Right ventricle myocardium superior (tissue), 1 donor: ENCODE measurements at regions of chr7 and their contacts with region 1.

Region 1: DNA sequence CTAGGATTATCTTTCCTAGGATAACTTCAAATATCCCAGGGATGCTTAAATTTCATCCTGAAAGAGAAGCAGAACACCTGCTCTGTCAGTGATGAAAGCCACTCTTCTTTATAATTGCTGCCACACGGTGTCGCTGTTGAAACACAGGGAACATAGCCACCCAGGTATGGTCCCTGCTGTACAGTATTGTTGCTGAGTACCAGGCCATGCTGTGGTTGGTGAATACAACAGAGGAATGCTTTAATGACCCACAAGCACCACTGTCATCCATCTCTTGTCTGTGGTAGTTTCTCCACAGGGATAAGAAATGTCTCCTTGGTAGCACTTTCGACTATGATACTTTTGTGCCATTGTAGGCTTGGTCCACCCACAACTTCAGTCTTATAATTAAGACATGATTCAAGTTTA is 70.6 kb upstream of the STARD3NL start:
- DNase-seq: peak; percentile 40
- ATAC-seq: peak; percentile 85

Region 2: DNA sequence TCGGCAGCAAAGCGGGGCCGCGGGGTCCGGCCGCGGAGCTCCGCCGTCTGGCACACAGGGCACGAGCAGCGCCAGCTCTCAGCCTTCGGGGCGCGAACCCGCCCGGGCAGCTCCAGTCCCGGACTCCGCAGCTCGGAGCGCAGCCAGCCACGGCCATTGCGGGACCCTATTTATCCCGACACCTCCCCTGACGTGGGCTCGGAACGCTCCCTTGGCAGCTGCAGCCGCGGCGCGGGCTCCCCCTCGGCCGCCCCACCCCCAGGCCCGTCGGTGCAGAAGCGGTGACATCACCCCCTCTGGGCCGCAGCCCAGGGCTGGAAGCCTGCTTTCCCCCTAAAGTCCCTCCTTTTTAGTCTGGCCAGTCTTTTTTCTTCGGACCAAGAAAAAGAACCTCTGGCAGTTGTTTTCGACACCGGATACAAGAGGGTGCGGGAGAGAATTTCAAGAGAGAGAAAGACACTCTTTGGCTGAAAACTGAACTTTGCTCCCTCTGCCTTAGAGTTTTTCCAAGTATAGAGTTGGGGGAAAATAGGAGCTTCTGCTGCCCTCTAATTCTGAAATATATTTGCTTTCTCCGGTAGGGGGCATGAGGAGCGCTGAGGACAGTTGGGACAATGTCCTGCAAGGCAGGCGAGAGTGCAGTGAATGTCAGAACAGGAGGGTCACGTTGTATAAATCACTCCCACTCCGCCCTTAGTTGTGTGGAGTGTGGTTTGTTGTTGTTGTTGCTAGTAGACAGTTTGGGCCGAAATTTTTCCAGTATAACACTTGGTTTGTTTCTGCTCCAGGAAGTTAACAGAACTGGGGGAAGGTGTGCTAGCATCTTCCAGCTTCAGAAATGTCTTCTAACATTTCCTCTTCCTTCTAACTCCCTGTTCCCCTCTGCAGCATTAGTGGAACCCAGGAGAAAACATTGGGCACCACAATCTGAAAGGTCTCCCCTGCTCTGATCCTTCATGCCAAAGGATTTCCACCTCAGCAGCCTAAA is 190.5 kb before region 1 on chr7 and contains the start of gene SFRP4:
- intact Hi-C with region 1: loop called (anchors 5 kb)
- DNase-seq: peak; percentile 72
- ATAC-seq: peak; percentile 62
- total RNA-seq, gene SFRP4: 0.59 TPM

Region 3: GRCh38 chr7:38016567-38016966 is 90.9 kb before region 1 on chr7:
- intact Hi-C with region 1: no loop called
- DNase-seq: no peak
- ATAC-seq: no peak

Region 4: DNA sequence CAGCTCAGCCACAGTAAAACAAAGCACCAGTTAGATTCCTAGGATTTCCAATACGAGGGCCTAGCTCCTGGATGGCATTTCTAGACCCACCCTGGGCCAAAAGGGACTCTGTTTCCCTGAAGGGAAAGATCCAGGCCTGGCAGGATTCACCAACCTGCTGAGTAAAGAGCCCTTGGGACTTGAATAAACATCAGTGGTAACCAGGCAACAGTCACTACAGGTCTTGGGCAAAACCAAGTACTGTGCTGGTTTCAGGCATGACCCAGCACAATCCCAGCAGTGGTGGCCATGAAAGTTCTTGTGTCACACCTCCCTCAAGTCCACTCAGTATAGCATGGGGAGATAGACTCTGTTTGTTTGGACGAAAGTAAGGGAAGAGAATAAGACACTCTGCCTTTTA is 39.5 kb after region 1 on chr7:
- intact Hi-C with region 1: no loop called
- DNase-seq: no peak
- ATAC-seq: no peak

Region 5: GRCh38 chr7:38169847-38170246 is 62.4 kb after region 1 on chr7:
- intact Hi-C with region 1: no loop called
- DNase-seq: peak; percentile 46
- ATAC-seq: peak; percentile 36

Region 6: GRCh38 chr7:38222481-38223096 is 115.1 kb after region 1 on chr7:
- intact Hi-C with region 1: loop called (anchors 2 kb)
- DNase-seq: no peak
- ATAC-seq: peak; percentile 92

Region 7: GRCh38 chr7:38318803-38319416 is 211.4 kb after region 1 on chr7:
- intact Hi-C with region 1: loop called (anchors 10 kb)
- DNase-seq: no peak
- ATAC-seq: peak; percentile 71